GM10248 (cell line): ENCODE measurements at regions of chr2 and their contacts with region 1.

Region 1: GRCh38 chr2:135913727-135914365 is 37.6 kb upstream of the MCM6 start:
- DNase-seq: peak; percentile 38
- CTCF ChIP-seq: peak; percentile 55

Region 2: DNA sequence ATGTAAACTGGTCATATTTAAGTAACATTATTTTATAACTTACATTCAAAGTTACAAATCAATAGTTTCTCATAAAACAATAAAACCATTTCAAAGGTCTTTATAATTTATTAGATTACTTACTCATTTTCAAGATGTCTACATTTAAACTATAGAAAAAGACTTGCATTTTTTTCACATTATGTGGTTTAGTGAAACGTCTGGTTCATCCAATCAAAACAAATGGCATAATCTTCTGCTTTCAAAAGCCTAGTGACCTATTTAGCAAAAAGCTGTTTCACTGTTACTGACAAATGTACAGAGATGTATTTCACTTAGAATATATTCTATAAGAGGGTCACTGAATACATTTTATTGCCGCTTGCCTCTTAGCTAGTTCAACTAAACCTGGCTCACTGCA is 11.7 kb after region 1 on chr2:
- CTCF ChIA-PET with region 1: interaction called, 11 read pairs
- POLR2A ChIA-PET with region 1: no interaction called
- DNase-seq: no peak
- CTCF ChIP-seq: no peak

Region 3: GRCh38 chr2:135931776-135932443 is 18.1 kb after region 1 on chr2:
- CTCF ChIA-PET with region 1: interaction called, 11 read pairs
- POLR2A ChIA-PET with region 1: no interaction called
- DNase-seq: peak; percentile 28
- CTCF ChIP-seq: no peak

Region 4: DNA sequence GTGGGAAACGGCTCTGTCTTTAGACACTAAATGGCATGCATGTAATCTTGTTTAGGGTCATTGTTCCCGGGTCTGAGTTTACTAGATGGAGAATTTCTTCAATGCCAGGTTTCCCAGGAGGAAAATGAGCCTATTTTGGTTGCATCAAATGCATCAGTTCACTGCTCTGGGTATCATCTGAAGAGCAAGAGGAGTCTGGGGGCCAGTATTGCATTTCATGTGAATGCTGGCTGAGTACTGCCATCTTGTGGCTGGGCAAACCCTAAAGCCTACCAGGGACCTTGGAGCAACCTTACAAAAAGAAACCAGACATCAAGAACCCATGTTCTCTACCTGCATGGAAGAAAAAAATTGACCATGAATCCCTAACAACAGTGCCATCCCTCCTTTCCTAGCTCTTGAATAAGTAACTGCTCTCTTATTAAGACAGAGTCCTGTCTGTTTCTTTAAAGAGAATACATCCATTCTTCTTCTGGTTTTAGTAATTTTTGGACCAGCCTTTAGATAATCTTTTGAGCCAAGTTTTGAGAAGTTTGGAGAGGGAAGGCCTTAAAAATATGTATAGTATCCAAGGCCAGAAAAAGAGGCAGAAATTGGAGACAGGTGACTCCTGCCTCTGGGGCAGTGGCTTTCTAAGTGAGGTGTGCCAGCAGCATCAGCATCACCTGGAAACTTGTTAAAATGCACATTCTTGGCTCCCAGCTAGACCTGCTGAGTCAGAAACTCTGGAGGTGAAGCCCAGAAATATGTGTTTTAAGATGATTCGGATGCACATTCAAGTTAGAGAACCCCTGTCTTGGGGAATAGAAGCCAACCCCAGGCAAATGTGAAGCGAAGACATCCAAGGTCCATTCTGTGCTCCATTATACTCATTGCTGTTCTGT is 465.1 kb after region 1 on chr2:
- CTCF ChIA-PET with region 1: interaction called, 73 read pairs
- POLR2A ChIA-PET with region 1: no interaction called
- DNase-seq: peak; percentile 42
- CTCF ChIP-seq: peak; percentile 78

Region 5: DNA sequence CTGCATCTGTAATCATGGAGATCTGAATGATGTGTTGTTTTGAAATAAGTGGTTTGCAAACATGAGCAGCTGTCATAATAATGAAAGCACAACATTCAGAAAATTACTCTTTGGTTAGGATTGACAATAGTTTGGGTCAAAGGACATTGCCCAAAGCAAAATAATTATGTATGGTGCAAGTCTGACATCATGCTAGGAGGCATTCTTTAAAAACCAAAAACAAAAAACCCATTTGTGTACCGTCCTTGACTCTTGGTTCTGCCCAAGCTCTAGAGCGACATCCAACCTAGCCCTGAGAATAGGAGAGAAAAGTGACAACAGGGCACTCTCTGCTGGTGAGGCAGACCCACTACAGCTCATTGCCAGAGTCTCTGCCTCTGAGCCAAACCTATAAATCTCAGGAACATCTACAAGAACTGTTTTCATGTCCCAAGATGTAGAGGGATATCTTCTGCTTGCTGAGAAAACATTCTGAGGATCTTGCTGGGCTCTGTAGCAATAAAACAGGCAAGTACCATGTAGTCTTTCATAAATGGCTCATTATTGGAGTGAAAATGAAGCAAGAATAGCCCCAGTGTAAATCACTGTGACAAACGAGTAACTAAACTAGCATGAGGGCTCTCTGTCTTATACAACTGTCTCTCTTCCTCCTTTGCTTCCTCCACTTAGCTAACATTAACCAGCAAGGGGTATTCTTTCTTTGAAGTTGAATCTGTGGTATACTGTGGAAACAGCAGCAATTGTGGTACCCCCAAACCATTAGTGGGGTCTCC is 470.9 kb after region 1 on chr2:
- CTCF ChIA-PET with region 1: interaction called, 73 read pairs
- POLR2A ChIA-PET with region 1: interaction called, 3 read pairs
- DNase-seq: peak; percentile 41
- CTCF ChIP-seq: peak; percentile 77

Region 6: GRCh38 chr2:136394136-136395060 is 480.6 kb after region 1 on chr2:
- CTCF ChIA-PET with region 1: interaction called, 10 read pairs
- POLR2A ChIA-PET with region 1: no interaction called
- DNase-seq: peak; percentile 44
- CTCF ChIP-seq: no peak